ENCODE measurements at regions of chr20 and their contacts with region 1.

Region 1: DNA sequence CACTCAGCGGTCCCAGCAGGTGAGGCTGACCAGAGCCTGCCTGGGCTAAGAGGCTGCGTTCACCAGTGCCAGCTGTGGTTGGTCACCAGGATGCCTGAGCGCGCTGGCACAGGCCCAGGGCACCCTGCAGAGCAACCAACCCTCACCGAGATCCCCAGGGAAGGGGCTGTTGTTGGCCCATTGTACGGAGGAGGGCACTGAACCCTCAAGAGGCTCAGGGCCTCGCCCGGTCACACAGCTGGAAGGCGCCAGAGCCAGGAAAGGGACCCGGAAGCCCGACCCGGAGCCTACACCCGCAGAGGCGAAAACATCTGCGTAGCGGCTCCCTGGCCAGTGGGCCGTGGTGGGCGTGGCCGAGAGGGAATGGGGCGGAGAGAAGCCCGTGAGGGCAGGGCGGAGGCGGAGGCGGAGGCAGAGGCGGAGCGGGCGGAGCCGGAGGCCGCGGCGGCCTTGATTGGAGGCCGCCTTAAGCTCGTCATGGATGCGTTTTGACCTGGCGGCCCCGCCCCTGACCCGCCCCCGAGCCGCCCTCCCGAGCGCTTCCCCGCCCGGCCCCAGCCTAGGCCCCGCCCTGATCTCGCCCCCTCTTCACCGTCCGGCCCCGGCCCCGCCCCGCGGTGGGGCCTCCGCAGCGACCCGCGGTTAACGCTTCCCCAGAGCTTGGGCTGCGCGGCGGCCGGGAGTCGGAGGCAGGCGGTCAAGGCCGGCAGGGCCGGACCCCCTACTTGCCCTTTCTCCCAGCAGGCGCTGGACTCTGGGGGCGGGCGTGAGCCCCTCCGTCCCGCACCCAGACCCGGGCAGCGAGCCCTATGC is 2.2 kb upstream of the MRGBP start:
- DNase-seq: peak; percentile 99 to 100
- H3K4me3 ChIP-seq: peak overlapping the region; percentile 57
- H3K4me3 Mint-ChIP-seq: peak overlapping the region; percentile 89
- H3K27ac Mint-ChIP-seq: peak overlapping the region; percentile 85
- H3K4me1 ChIP-seq: peaks cover 21% of the 10 kb centered on the region
- H3K4me1 Mint-ChIP-seq: peaks cover 15% of the 10 kb centered on the region
- H3K27me3 ChIP-seq: no peaks in the 10 kb centered on the region
- H3K27me3 Mint-ChIP-seq: no peaks in the 10 kb centered on the region
- CTCF ChIP-seq: no peak

Region 2: DNA sequence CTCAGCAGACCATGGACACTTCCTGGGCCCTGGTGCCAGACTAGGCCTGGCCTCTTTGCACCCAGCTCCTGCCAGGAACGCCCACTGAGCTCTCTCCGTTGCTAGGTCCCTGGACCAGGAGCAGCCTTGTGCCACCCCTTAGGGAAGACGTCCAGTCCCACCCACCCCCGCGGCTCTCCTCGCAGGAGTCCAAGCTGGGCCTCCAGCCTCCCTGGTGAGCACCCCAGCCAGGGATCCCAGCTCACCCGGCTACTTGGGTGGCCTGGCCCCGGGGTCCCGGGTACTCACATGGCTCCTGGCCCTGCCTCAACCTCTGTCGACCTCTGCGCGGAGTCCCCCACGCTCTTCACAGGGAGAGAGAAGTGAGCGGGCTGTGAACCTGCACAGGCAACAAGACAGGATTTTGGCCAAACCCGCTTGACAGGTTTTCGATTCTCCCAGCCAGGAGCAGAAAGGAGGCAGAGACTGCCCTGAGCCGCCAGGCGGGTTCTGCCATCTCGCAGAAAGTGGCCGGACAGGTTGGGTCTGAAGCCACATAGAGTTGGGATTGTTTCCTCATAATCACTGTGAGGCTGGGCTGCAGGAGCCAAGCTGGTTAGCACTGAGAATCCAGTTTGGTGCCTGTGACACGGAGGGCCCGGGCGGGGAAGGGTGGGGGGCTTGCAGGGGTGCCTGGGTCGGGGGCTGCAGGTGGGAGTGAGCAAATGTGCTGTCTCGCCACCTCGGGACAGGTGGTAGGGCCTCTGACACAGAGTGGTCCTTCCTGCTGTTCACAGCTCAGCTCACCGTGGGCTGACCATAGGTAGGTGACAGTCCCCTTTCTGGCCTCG is 366.7 kb before region 1 on chr20 and contains the start of gene RBBP8NL:
- CTCF ChIA-PET with region 1: interaction called, 6 read pairs
- POLR2A ChIA-PET with region 1: interaction called, 10 read pairs
- intact Hi-C with region 1: no loop called
- DNase-seq: peak; percentile 100
- H3K4me3 ChIP-seq: peak within 1 kb of the TSS; percentile 41
- H3K4me3 Mint-ChIP-seq: peak within 1 kb of the TSS; percentile 90
- H3K27ac Mint-ChIP-seq: peak within 1 kb of the TSS; percentile 88
- H3K4me1 ChIP-seq: peaks cover 92% of the 10 kb centered on the region
- H3K4me1 Mint-ChIP-seq: peaks cover 84% of the 10 kb centered on the region
- H3K27me3 ChIP-seq: no peaks in the 10 kb centered on the region
- H3K27me3 Mint-ChIP-seq: no peaks in the 10 kb centered on the region
- CTCF ChIP-seq: peak; percentile 42 to 79
- total RNA-seq, gene RBBP8NL: 39.2 and 40.5 TPM in 2 replicates

Region 3: GRCh38 chr20:62623488-62624324 is 170.4 kb before region 1 on chr20:
- CTCF ChIA-PET with region 1: interaction called, 6 read pairs
- POLR2A ChIA-PET with region 1: interaction called, 16 read pairs
- intact Hi-C with region 1: no loop called
- DNase-seq: peak; percentile 97 to 99
- H3K4me3 ChIP-seq: 0 out of 2 replicates have a peak overlapping the region, but pooled peaks have one; percentile 3
- H3K4me3 Mint-ChIP-seq: peak overlapping the region; percentile 61
- H3K27ac Mint-ChIP-seq: peak overlapping the region; percentile 80
- H3K4me1 ChIP-seq: peaks cover 33% of the 10 kb centered on the region
- H3K4me1 Mint-ChIP-seq: peaks cover 23% of the 10 kb centered on the region
- H3K27me3 ChIP-seq: no peaks in the 10 kb centered on the region
- H3K27me3 Mint-ChIP-seq: no peaks in the 10 kb centered on the region
- CTCF ChIP-seq: no peak

Region 4: DNA sequence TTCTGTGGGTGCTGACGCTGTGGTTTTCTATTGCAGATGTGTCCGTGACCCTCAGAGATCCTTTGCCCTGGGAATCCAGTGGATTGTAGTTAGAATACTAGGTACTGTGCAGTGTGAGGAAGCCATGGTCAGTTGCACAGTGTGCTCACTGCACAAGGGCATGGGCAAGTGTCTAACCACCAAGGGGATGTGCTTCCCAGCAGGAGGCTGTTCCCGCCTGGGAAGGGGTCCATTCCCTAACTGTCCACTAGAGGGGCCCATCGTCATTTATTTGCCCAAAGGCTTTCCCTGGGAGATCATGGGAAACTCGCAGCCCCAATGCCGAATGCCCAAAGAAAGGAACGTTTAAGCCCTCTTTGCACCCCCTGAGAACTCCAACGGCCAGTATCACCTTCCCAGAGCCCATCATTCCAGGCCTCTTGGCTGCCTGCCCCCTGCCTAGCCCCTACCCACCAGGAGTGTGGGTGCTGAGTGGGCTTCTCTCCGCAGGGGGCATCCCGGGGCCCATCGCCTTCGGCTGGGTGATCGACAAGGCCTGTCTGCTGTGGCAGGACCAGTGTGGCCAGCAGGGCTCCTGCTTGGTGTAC is 125.6 kb before region 1 on chr20:
- CTCF ChIA-PET with region 1: interaction called, 23 read pairs
- POLR2A ChIA-PET with region 1: no interaction called
- intact Hi-C with region 1: loop called (anchors 1 kb)
- DNase-seq: peak; percentile 90 to 94
- H3K4me3 ChIP-seq: no peak overlapping the region
- H3K4me3 Mint-ChIP-seq: no peak overlapping the region
- H3K27ac Mint-ChIP-seq: no peak overlapping the region
- H3K4me1 ChIP-seq: no peaks in the 10 kb centered on the region
- H3K4me1 Mint-ChIP-seq: no peaks in the 10 kb centered on the region
- H3K27me3 ChIP-seq: no peaks in the 10 kb centered on the region
- H3K27me3 Mint-ChIP-seq: no peaks in the 10 kb centered on the region
- CTCF ChIP-seq: peak; percentile 98 to 99

Region 5: GRCh38 chr20:62728028-62728780 is 65.9 kb before region 1 on chr20:
- CTCF ChIA-PET with region 1: interaction called, 6 read pairs
- POLR2A ChIA-PET with region 1: interaction called, 5 read pairs
- intact Hi-C with region 1: loop called (anchors 5 kb)
- DNase-seq: no peak
- H3K4me3 ChIP-seq: no peak overlapping the region
- H3K4me3 Mint-ChIP-seq: no peak overlapping the region
- H3K27ac Mint-ChIP-seq: no peak overlapping the region
- H3K4me1 ChIP-seq: no peaks in the 10 kb centered on the region
- H3K4me1 Mint-ChIP-seq: no peaks in the 10 kb centered on the region
- H3K27me3 ChIP-seq: peaks cover 13% of the 10 kb centered on the region
- H3K27me3 Mint-ChIP-seq: peaks cover 51% of the 10 kb centered on the region
- CTCF ChIP-seq: no peak

Measured in Caco-2 (cell line).